ENCODE measurements at regions of chr19 and their contacts with region 1.

Region 1: GRCh38 chr19:48110350-48110966 is at the start of gene PLA2G4C:
- DNase-seq: peak; percentile 87 to 95 (median 90)
- H3K4me3 ChIP-seq: peak within 1 kb of the TSS; percentile 43 to 84 (median 69)
- H3K27ac ChIP-seq: peak within 1 kb of the TSS; percentile 93 to 100 (median 99)
- H3K27me3 ChIP-seq: no peaks in the 10 kb centered on the region
- CTCF ChIP-seq: peak in 36 of 56 donors; percentile 4 to 65 (median 33)
- total RNA-seq, gene PLA2G4C: 52.0 to 175 (median 92.9) TPM

Region 2: GRCh38 chr19:48069435-48069834 is 41.0 kb before region 1 on chr19:
- intact Hi-C with region 1: no loop called
- DNase-seq: no peak
- H3K4me3 ChIP-seq: no peak overlapping the region
- H3K27ac ChIP-seq: no peak overlapping the region
- H3K27me3 ChIP-seq: no peaks in the 10 kb centered on the region
- CTCF ChIP-seq: no peak

Region 3: DNA sequence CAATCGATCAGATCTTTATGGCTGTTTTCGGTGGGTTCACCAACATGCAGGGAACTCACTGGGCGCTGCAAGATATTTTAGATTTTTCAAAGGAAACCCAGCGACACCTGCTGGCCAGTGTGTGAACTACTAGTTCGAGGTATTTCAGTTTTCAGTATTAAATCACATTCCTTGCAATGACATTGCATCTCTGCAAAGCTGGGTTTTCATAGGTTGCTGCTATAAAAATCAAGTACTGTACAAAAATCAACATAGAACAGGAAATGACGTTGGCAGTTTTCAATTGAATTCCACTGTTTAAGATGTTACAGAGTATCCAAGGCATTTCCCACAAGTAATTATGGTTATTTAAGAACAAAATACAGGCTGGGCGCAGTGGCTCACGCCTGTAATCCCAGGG is 42.1 kb after region 1 on chr19:
- intact Hi-C with region 1: loop called (anchors 1 to 2 kb)
- DNase-seq: peak; percentile 57 to 86 (median 68)
- H3K4me3 ChIP-seq: peak overlapping the region in 1 of 59 donors; percentile 13
- H3K27ac ChIP-seq: peak overlapping the region in 47 of 59 donors; percentile 0 to 83 (median 63)
- H3K27me3 ChIP-seq: no peaks in the 10 kb centered on the region
- CTCF ChIP-seq: peak; percentile 87 to 100 (median 95)

Region 4: GRCh38 chr19:48203732-48204628 is 93.5 kb after region 1 on chr19:
- intact Hi-C with region 1: loop called in 1 of 2 experiments (anchors 5 kb)
- DNase-seq: peak; percentile 93 to 98 (median 97)
- H3K4me3 ChIP-seq: peak overlapping the region; percentile 52 to 95 (median 78)
- H3K27ac ChIP-seq: peak overlapping the region; percentile 51 to 94 (median 85)
- H3K27me3 ChIP-seq: no peaks in the 10 kb centered on the region
- CTCF ChIP-seq: peak in 46 of 56 donors; percentile 8 to 63 (median 43)

Region 5: GRCh38 chr19:48255376-48256303 is 145.2 kb after region 1 on chr19 and contains the start of gene CARD8:
- intact Hi-C with region 1: loop called (anchors 5 to 10 kb)
- DNase-seq: peak; percentile 65 to 87 (median 78)
- H3K4me3 ChIP-seq: peak within 1 kb of the TSS; percentile 46 to 90 (median 70)
- H3K27ac ChIP-seq: peak within 1 kb of the TSS; percentile 16 to 97 (median 88)
- H3K27me3 ChIP-seq: no peaks in the 10 kb centered on the region
- CTCF ChIP-seq: peak in 40 of 56 donors; percentile 11 to 64 (median 34)
- total RNA-seq, gene CARD8: 10.8 to 45.2 (median 24.0) TPM

Measured in dorsolateral prefrontal cortex (tissue), 120 donors.